GM10248 (cell line): ENCODE measurements at regions of chr7 and their contacts with region 1.

Region 1: GRCh38 chr7:93442478-93443224 is 131.9 kb downstream of the CALCR start:
- DNase-seq: no peak
- CTCF ChIP-seq: peak; percentile 66

Region 2: DNA sequence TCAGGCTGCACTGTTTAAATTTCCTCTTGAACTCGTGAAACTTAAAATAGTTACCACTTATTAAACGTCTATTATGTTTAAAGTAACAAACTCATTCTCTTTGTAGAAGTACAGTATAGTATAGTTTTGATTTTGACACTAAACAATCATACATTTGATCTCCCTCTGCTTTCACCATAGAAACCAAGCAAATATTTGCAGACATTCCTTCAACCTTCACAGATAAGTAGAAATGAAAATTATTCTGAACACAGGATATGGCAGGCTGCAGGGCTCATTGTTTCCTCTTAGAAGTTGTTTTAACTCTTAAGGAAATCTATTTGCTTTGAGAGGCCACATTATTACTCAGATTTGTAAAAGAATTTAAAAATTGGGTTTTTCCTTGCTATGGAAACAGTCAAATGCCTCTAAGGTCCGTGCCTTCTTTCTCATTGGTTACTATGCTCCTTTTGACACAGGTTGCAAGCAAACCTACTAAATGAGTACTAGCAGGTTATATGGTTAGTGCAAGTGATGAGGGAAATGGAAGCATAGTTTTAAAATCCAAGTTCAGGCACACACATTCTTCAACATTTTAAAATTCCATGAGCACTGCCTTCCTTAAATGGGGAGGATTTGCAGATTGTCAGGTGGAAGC is 759.6 kb before region 1 on chr7:
- CTCF ChIA-PET with region 1: no interaction called
- POLR2A ChIA-PET with region 1: no interaction called
- DNase-seq: no peak
- CTCF ChIP-seq: no peak

Region 3: GRCh38 chr7:93147363-93147762 is 295.3 kb before region 1 on chr7:
- CTCF ChIA-PET with region 1: no interaction called
- POLR2A ChIA-PET with region 1: no interaction called
- DNase-seq: peak; percentile 31
- CTCF ChIP-seq: no peak

Region 4: GRCh38 chr7:93453264-93453663 is 10.6 kb after region 1 on chr7:
- CTCF ChIA-PET with region 1: interaction called, 16 read pairs
- POLR2A ChIA-PET with region 1: no interaction called
- DNase-seq: no peak
- CTCF ChIP-seq: no peak

Region 5: DNA sequence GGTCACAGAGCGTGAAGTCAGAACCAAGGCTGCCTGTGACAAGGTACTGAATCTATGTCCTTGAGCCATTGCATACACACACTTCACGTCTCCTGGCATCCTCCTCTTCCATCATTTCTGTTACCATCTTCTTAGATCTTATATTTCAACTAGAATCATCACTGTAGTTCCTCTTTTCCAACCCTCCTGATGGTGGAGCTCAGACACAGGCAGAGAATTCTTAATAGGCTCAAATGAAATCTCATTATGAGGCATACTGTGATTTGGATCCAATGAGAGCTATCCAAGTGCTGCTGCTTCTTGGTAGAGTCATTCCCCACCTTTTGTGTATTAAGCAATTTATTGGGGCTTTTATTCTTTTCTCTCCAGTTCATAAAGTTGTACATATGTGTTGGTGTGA is 18.7 kb after region 1 on chr7:
- CTCF ChIA-PET with region 1: interaction called, 13 read pairs
- POLR2A ChIA-PET with region 1: no interaction called
- DNase-seq: no peak
- CTCF ChIP-seq: no peak